Activated CD8-positive, alpha-beta T cell treated with anti-CD3 and anti-CD28 coated beads, Interleukin-2, amount 10 ng/mL, durations not matched to agents 7 days and 5 days (primary cell): ENCODE measurements at regions of chr17 and their contacts with region 1.

Region 1: GRCh38 chr17:43377056-43377810 is 21.6 kb upstream of the ARL4D start:
- DNase-seq: no peak
- ATAC-seq: no peak
- H3K4me3 Mint-ChIP-seq: no peak overlapping the region
- H3K27ac Mint-ChIP-seq: no peak overlapping the region
- H3K4me1 Mint-ChIP-seq: peaks cover 11% of the 10 kb centered on the region
- H3K27me3 Mint-ChIP-seq: no peaks in the 10 kb centered on the region

Region 2: GRCh38 chr17:43085474-43085873 is 291.8 kb before region 1 on chr17:
- CTCF ChIA-PET with region 1: no interaction called
- POLR2A ChIA-PET with region 1: no interaction called
- DNase-seq: no peak
- ATAC-seq: no peak
- H3K4me3 Mint-ChIP-seq: no peak overlapping the region
- H3K27ac Mint-ChIP-seq: no peak overlapping the region
- H3K4me1 Mint-ChIP-seq: no peaks in the 10 kb centered on the region
- H3K27me3 Mint-ChIP-seq: no peaks in the 10 kb centered on the region

Region 3: DNA sequence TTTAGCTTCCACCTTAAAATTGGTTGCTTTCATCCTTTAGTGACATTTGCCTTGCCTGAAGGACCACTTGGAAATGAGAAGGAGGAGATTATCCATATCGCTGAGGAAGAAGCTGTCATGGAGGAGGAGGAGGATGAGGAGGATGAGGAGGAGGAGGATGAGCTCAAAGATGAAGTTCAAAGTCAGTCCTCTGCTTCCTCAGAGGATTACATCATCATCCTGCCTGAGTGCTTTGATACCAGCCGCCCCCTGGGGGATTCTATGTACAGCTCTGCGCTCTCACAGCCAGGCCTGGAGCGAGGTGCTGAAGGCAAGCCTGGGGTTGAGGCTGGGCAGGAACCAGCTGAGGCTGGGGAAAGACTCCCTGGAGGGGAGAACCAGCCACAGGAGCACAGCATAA is 177.1 kb before region 1 on chr17:
- CTCF ChIA-PET with region 1: no interaction called
- POLR2A ChIA-PET with region 1: no interaction called
- DNase-seq: no peak
- ATAC-seq: no peak
- H3K4me3 Mint-ChIP-seq: no peak overlapping the region
- H3K27ac Mint-ChIP-seq: no peak overlapping the region
- H3K4me1 Mint-ChIP-seq: no peaks in the 10 kb centered on the region
- H3K27me3 Mint-ChIP-seq: no peaks in the 10 kb centered on the region

Region 4: DNA sequence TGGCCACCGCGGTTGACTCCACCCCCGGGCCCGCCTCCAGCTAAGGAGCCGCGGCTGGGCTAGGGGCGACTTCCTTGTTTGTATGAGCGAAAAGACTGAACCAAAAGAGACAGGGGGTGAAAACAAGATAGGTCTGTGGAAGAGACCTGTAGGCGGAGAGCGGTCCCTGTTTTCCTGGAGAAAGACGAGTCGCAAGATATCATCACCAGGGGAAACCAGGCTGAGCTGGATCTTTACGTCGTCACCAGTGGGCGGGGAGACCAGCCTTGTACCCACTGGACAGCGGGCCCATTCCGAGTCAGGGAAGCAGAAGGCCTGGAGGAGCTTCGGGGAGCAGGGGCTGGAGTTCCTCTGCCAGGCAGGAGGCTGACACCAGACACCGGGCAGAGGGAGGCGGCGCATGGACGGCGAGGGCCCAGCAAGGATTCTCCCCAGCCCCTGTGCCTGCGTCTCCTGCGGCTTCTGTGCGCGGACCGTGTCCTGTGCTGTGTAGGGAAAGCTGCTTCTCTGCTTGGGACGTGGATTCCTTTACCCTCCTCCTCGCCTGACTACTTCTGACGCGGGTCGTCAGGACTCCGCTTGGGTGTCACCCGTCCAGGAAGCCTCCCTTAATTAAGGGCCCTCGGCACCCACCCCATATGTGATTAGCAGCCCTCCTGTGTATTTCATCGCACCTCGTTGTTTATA is 11.3 kb after region 1 on chr17:
- CTCF ChIA-PET with region 1: interaction called, 7 read pairs
- POLR2A ChIA-PET with region 1: interaction called, 11 read pairs
- DNase-seq: peak; percentile 92
- ATAC-seq: peak; percentile 77
- H3K4me3 Mint-ChIP-seq: peak overlapping the region; percentile 82
- H3K27ac Mint-ChIP-seq: peak overlapping the region; percentile 95
- H3K4me1 Mint-ChIP-seq: peaks cover 27% of the 10 kb centered on the region
- H3K27me3 Mint-ChIP-seq: no peaks in the 10 kb centered on the region

Region 5: GRCh38 chr17:43442711-43443110 is 65.5 kb after region 1 on chr17:
- CTCF ChIA-PET with region 1: no interaction called
- POLR2A ChIA-PET with region 1: no interaction called
- DNase-seq: no peak
- ATAC-seq: no peak
- H3K4me3 Mint-ChIP-seq: no peak overlapping the region
- H3K27ac Mint-ChIP-seq: no peak overlapping the region
- H3K4me1 Mint-ChIP-seq: no peaks in the 10 kb centered on the region
- H3K27me3 Mint-ChIP-seq: peaks cover 2% of the 10 kb centered on the region